GM12878 (cell line): ENCODE measurements at regions of chr2 and their contacts with region 1.

Region 1: DNA sequence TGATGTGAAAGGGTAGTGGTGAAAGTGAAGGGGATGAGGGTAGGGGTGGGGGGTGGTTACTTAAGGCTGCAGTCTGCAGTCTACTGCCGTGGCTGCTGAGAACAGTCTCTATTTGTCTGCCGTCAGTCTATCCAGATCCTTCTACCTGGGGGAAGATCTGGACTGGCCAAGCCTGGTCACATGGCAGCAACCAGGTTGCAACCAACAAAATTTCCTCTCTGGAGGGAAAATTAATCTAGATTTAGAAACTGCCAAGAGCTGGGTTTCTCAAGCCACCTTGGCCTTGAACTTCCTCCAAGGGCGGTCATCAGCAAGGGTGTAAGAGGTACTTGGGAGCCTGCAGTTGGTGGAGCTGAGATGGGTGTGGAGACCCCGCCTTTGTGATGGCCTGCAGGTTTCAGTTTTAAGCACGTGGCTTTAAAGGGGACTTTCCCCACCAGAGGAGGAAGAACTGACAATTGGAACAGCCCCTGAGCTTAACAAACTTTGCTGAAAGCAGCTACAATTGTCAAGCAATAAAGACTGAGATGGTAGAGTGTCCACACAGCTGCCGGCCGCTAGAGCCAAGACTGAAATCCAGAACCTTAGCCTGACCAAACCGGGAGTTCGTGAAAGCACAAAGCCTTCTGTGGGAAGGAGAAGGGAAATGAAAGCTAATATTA is 31.4 kb upstream of the KCMF1 start:
- DNase-seq: peak; percentile 99
- ATAC-seq: peak; percentile 76
- H3K4me3 ChIP-seq: peak overlapping the region; percentile 57
- H3K27ac ChIP-seq: peak overlapping the region; percentile 100
- H3K4me1 ChIP-seq: peaks cover 50% of the 10 kb centered on the region
- H3K27me3 ChIP-seq: no peaks in the 10 kb centered on the region
- CTCF ChIP-seq: 0 out of 6 replicates have a peak, but pooled peaks of 1 of the 3 experiments have one; percentile 5
- EP300 ChIP-seq: peak; percentile 51 to 54; a peak in 3 of 4 replicates
- POLR2A ChIP-seq: peak; percentile 75
- RAD21 ChIP-seq: peak; percentile 13; the same call in 1 of the 2 replicates

Region 2: DNA sequence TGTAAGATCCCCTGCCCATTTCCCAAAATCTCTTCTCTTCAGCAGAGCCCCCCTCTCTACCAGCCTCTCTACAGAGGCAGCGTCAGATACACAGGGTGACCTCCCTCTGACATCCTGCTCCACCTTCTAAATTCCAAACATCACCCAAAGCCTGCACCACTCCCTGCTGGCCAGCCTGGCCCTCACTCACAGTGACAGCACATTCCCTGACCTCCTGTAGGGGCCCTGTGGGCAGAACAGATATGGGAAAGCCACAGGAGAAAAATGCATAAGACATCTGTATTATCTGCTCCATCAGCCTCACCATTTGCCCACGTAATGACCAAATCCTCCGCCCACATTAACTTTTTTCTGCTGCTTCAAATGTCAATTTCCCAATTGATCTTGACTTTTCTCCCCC is 99.3 kb before region 1 on chr2:
- CTCF ChIA-PET with region 1: no interaction called
- POLR2A ChIA-PET with region 1: no interaction called
- RAD21 ChIA-PET with region 1: no interaction called
- SMC1A ChIA-PET with region 1: no interaction called
- in situ Hi-C with region 1: no loop called
- intact Hi-C with region 1: no loop called
- DNase-seq: no peak
- ATAC-seq: no peak
- H3K4me3 ChIP-seq: no peak overlapping the region
- H3K27ac ChIP-seq: no peak overlapping the region
- H3K4me1 ChIP-seq: no peaks in the 10 kb centered on the region
- H3K27me3 ChIP-seq: no peaks in the 10 kb centered on the region
- CTCF ChIP-seq: no peak
- EP300 ChIP-seq: no peak
- POLR2A ChIP-seq: no peak
- RAD21 ChIP-seq: no peak

Region 3: GRCh38 chr2:84919885-84920580 is 19.5 kb before region 1 on chr2:
- CTCF ChIA-PET with region 1: interaction called, 275 read pairs
- POLR2A ChIA-PET with region 1: interaction called, 49 read pairs
- RAD21 ChIA-PET with region 1: interaction called, 141 read pairs
- SMC1A ChIA-PET with region 1: interaction called, 176 read pairs
- in situ Hi-C with region 1: no loop called
- intact Hi-C with region 1: no loop called
- DNase-seq: no peak
- ATAC-seq: peak; percentile 64
- H3K4me3 ChIP-seq: peak overlapping the region; percentile 4
- H3K27ac ChIP-seq: peak overlapping the region; percentile 74
- H3K4me1 ChIP-seq: peaks cover 30% of the 10 kb centered on the region
- H3K27me3 ChIP-seq: no peaks in the 10 kb centered on the region
- CTCF ChIP-seq: no peak
- EP300 ChIP-seq: no peak
- POLR2A ChIP-seq: no peak
- RAD21 ChIP-seq: no peak

Region 4: DNA sequence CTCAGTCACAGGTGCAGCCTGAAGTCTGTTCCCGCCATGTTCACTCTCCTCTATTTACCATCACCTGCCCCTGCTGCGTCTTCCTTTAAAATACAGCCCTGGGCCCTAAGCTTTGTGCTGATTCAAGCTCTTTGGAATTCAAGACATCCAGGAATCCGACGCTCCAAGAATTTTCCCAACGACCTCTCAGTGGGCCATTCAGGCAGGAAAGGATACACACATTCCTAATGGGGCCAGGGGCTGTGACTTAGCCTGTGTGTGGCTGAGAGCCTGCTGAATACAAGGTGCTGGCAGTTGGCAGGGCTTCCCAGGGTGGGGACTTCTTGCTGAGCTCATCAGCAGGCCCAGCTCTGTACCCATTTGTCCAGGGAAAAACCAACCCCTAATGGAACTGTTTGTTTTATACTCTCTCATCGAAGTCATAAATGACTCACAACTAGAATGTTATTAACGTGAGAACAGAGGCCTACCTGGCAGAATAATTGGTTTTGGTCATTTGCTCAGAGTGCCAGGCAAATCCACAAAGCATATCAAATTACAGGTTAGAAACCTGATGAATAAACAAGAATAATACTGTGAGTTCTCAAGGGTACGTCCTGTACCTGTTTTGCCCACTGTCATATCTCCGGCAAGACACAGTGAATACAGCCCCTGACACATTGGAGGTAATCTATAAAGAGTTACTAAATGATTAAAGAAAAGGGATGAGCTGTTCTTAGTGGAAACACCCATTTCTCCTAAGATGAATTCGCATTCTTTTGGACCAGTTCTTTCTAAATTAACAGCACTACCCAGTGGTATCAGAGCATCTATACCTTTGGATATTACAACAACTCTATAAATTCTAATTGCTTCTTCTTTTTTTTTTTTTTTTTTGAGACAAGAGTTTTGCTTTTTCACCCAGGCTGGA is 18.8 kb after region 1 on chr2:
- CTCF ChIA-PET with region 1: interaction called, 7 read pairs
- POLR2A ChIA-PET with region 1: interaction called, 11 read pairs
- RAD21 ChIA-PET with region 1: interaction called, 12 read pairs
- SMC1A ChIA-PET with region 1: interaction called, 378 read pairs
- in situ Hi-C with region 1: no loop called
- intact Hi-C with region 1: no loop called
- DNase-seq: no peak
- ATAC-seq: peak; percentile 77
- H3K4me3 ChIP-seq: no peak overlapping the region
- H3K27ac ChIP-seq: no peak overlapping the region
- H3K4me1 ChIP-seq: peaks cover 8% of the 10 kb centered on the region
- H3K27me3 ChIP-seq: no peaks in the 10 kb centered on the region
- CTCF ChIP-seq: no peak
- EP300 ChIP-seq: no peak
- POLR2A ChIP-seq: no peak
- RAD21 ChIP-seq: no peak

Region 5: DNA sequence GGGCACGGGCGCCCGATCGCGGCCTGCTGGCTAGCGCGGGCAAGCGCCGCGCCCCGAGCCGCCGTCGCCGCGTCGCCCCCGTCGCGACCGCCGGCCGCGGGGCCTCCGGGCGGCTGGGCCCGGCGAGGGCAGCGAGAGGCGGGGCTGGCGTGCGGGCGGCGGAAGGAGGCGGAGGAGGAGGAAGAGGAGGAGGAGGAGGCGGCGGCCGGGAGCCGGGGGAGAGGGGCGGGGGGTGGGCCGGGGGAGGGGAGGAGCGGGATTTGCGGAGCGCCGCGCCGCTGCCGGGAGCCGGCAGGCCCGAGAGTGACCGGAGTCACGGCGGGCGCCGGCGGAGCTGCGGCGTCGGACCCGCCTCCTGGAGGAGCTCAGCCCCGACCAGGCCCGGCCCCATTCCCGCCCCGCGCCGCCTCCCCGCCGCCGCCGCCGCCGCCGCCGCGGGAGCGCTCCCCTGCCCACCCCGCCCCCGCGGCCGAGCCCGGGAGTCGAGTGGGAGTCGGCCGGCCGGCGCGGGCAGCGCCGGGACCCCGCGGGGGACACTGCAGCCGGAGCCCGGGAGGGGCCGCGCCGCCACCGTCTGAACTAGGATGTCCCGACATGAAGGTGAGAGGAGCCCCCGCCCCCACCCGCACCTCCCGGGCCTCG is 31.4 kb after region 1 on chr2 and contains the start of gene KCMF1:
- CTCF ChIA-PET with region 1: interaction called, 61 read pairs
- POLR2A ChIA-PET with region 1: interaction called, 265 read pairs
- RAD21 ChIA-PET with region 1: interaction called, 300 read pairs
- SMC1A ChIA-PET with region 1: interaction called, 378 read pairs
- in situ Hi-C with region 1: no loop called
- intact Hi-C with region 1: loop called (anchors 1 kb)
- DNase-seq: no peak
- ATAC-seq: peak; percentile 41
- H3K4me3 ChIP-seq: peak within 1 kb of the TSS; percentile 85
- H3K27ac ChIP-seq: peak within 1 kb of the TSS; percentile 93
- H3K4me1 ChIP-seq: no peaks in the 10 kb centered on the region
- H3K27me3 ChIP-seq: no peaks in the 10 kb centered on the region
- CTCF ChIP-seq: no peak
- EP300 ChIP-seq: no peak
- POLR2A ChIP-seq: peak; percentile 61
- RAD21 ChIP-seq: no peak
- polyA plus RNA-seq, gene KCMF1: 8.4 to 9.8 TPM

Region 6: DNA sequence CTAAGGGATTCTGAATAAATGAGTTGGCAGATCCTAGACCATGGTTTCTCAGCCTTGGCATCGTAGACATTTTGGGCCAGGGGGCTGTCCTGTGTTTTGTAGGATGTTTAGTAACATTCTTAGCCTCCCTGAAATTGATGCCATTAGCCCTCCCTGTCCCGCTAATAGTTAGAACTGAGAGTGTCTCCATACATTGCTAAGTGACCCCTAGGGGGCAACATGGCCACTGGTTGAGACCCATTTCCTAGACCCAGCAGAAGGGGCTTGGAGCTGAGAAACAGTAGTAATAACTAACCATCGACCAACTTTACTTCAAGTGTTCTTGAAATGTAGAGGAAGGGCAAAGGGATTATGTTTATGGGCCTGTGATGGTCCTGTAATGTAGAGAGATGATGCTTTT is 72.2 kb after region 1 on chr2:
- CTCF ChIA-PET with region 1: interaction called, 61 read pairs
- POLR2A ChIA-PET with region 1: interaction called, 6 read pairs
- RAD21 ChIA-PET with region 1: interaction called, 13 read pairs
- SMC1A ChIA-PET with region 1: interaction called, 35 read pairs
- in situ Hi-C with region 1: no loop called
- intact Hi-C with region 1: loop called (anchors 5 kb)
- DNase-seq: no peak
- ATAC-seq: peak; percentile 29; the same call in 2 of the 3 replicates
- H3K4me3 ChIP-seq: no peak overlapping the region
- H3K27ac ChIP-seq: no peak overlapping the region
- H3K4me1 ChIP-seq: peaks cover 32% of the 10 kb centered on the region
- H3K27me3 ChIP-seq: no peaks in the 10 kb centered on the region
- CTCF ChIP-seq: peak in 1 of 3 experiments; percentile 9; a peak in 2 of 6 replicates
- EP300 ChIP-seq: no peak
- POLR2A ChIP-seq: no peak
- RAD21 ChIP-seq: no peak

Region 7: DNA sequence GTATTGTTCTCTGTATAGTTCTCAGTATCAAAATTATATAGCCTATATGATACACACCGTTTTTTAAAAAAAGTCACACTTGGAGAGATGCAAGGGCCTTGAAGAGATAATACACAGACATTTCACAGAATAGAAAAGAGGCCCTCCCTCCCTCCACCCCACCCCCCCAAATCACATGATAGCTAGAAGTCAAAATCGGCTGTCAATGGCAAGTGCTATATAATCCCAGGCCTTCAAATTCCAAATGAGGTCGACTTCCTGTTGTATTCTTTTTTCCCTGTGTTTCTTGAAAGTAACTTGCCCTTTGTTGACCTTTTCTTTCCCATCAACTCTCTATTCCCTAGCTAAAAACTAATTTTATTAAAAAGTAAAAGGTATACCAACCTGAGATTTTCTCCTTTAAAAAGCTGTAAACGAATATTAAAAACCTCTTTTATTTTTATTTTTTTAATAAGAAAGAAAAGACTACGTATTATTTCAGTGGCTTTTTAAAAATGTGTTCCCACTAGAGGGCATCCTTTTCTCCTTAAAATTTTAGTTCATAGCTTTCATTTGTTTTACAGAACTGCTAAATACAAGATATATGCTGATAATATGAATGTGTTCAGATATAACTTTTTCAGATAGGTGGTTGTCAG is 78.0 kb after region 1 on chr2:
- CTCF ChIA-PET with region 1: interaction called, 61 read pairs
- POLR2A ChIA-PET with region 1: interaction called, 6 read pairs
- RAD21 ChIA-PET with region 1: interaction called, 13 read pairs
- SMC1A ChIA-PET with region 1: interaction called, 35 read pairs
- in situ Hi-C with region 1: no loop called
- intact Hi-C with region 1: loop called (anchors 5 kb)
- DNase-seq: no peak
- ATAC-seq: 0 out of 3 replicates have a peak, but pooled peaks have one; percentile 20
- H3K4me3 ChIP-seq: no peak overlapping the region
- H3K27ac ChIP-seq: no peak overlapping the region
- H3K4me1 ChIP-seq: peaks cover 13% of the 10 kb centered on the region; the same call in 1 of the 2 replicates
- H3K27me3 ChIP-seq: no peaks in the 10 kb centered on the region
- CTCF ChIP-seq: peak in 2 of 3 experiments; percentile 3 to 23; a peak in 2 of 6 replicates
- EP300 ChIP-seq: no peak
- POLR2A ChIP-seq: no peak
- RAD21 ChIP-seq: no peak